ENCODE measurements at regions of chr12 and their contacts with region 1.

Region 1: GRCh38 chr12:15220994-15221885 is at the start of gene RERG:
- DNase-seq: peak; percentile 72
- H3K4me3 ChIP-seq: peak within 1 kb of the TSS; percentile 35 to 43
- H3K27ac ChIP-seq: peak within 1 kb of the TSS; percentile 69 to 70
- H3K4me1 ChIP-seq: no peaks in the 10 kb centered on the region
- H3K27me3 ChIP-seq: no peaks in the 10 kb centered on the region
- CTCF ChIP-seq: peak; percentile 93 to 97 (median 95)
- POLR2A ChIP-seq: no peak
- total RNA-seq, gene RERG: 12.7 to 13.3 TPM

Region 2: GRCh38 chr12:15001733-15002382 is 219.4 kb before region 1 on chr12:
- intact Hi-C with region 1: loop called (anchors 10 kb)
- DNase-seq: peak; percentile 55
- H3K4me3 ChIP-seq: no peak overlapping the region
- H3K27ac ChIP-seq: peak overlapping the region; percentile 28 to 48
- H3K4me1 ChIP-seq: no peaks in the 10 kb centered on the region
- H3K27me3 ChIP-seq: no peaks in the 10 kb centered on the region
- CTCF ChIP-seq: no peak
- POLR2A ChIP-seq: no peak

Region 3: GRCh38 chr12:15268927-15269552 is 47.8 kb after region 1 on chr12:
- intact Hi-C with region 1: loop called (anchors 5 kb)
- DNase-seq: peak; percentile 38
- H3K4me3 ChIP-seq: no peak overlapping the region
- H3K27ac ChIP-seq: no peak overlapping the region
- H3K4me1 ChIP-seq: peaks cover under 1% of the 10 kb centered on the region
- H3K27me3 ChIP-seq: no peaks in the 10 kb centered on the region
- CTCF ChIP-seq: peak; percentile 64 to 87 (median 81)
- POLR2A ChIP-seq: no peak

Measured in prostate gland (tissue), 2 donors.